BJ (cell line): ENCODE measurements at regions of chr1 and their contacts with region 1.

Region 1: GRCh38 chr1:234486498-234487448 is 7.8 kb upstream of the TARBP1 start:
- DNase-seq: peak; percentile 49
- H3K4me3 ChIP-seq: no peak overlapping the region
- H3K27me3 ChIP-seq: 0 out of 2 replicates have a peak, but pooled peaks cover 1% of the 10 kb centered on the region
- CTCF ChIP-seq: peak; percentile 71

Region 2: DNA sequence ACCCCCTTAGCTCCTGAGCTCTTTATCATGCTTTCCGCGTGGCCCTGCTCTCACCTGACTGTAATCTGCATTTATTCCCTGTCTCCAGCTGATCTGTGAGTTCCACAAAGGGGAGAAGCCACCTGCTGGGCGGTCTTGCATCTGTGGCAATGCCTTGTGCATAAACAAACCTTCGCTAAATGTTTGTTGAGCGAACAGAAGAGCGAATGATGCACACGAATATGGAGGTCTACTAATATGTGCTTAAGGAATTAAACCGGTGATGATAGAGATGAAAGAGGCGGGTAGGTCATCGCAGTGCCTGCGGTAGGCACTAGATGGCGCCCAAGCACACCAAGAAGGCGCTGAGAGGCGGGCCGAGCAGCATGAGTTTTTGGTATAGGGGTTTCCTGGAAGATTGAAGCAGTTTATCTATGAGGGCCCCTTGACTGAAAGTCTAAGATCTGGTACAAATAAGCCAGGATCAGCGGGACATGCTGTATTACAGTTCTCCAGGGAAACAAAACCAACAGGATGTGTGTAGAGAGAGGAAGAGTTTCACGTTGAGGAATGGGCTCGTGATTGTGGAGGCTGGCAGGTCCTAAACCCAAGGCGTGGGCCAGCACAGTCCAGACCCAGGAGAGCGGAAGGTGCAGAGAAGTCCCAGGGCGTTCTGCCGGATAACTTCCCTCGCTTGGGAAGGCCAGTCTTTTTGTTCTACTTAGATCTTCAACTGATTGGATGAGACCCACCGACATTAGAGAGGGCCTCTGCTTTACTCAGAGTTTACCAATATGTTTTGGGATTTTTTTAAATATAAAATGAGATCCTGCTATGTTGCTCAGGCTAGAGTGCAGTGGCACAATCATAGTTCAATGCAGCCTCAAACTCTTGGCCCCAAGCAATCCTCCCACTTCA is 607.2 kb after region 1 on chr1:
- CTCF ChIA-PET with region 1: interaction called, 28 read pairs
- POLR2A ChIA-PET with region 1: interaction called, 5 read pairs
- DNase-seq: no peak
- H3K4me3 ChIP-seq: no peak overlapping the region
- H3K27me3 ChIP-seq: no peaks in the 10 kb centered on the region; the same call in 1 of the 2 replicates
- CTCF ChIP-seq: peak; percentile 95